Caco-2 (cell line): ENCODE measurements at regions of chr10 and their contacts with region 1.

Region 1: GRCh38 chr10:18651324-18652007 is at the start of gene NSUN6:
- DNase-seq: peak; percentile 94 to 95
- H3K4me3 ChIP-seq: peak within 1 kb of the TSS; percentile 57
- H3K4me3 Mint-ChIP-seq: peak within 1 kb of the TSS; percentile 92
- H3K27ac Mint-ChIP-seq: peak within 1 kb of the TSS; percentile 94
- H3K4me1 ChIP-seq: peaks cover 12% of the 10 kb centered on the region; the same call in 1 of the 2 replicates
- H3K4me1 Mint-ChIP-seq: peaks cover 9% of the 10 kb centered on the region
- H3K27me3 ChIP-seq: no peaks in the 10 kb centered on the region
- H3K27me3 Mint-ChIP-seq: no peaks in the 10 kb centered on the region
- CTCF ChIP-seq: peak in 1 of 2 experiments; percentile 11
- total RNA-seq, gene NSUN6: 17.3 and 17.7 TPM in 2 replicates

Region 2: GRCh38 chr10:18214691-18215563 is 436.5 kb before region 1 on chr10:
- CTCF ChIA-PET with region 1: no interaction called
- POLR2A ChIA-PET with region 1: no interaction called
- intact Hi-C with region 1: no loop called
- DNase-seq: peak; percentile 46 to 65
- H3K4me3 ChIP-seq: no peak overlapping the region
- H3K4me3 Mint-ChIP-seq: no peak overlapping the region
- H3K27ac Mint-ChIP-seq: no peak overlapping the region
- H3K4me1 ChIP-seq: peaks cover 11% of the 10 kb centered on the region
- H3K4me1 Mint-ChIP-seq: peaks cover 7% of the 10 kb centered on the region
- H3K27me3 ChIP-seq: no peaks in the 10 kb centered on the region
- H3K27me3 Mint-ChIP-seq: peaks cover under 1% of the 10 kb centered on the region
- CTCF ChIP-seq: peak; percentile 81 to 91

Region 3: DNA sequence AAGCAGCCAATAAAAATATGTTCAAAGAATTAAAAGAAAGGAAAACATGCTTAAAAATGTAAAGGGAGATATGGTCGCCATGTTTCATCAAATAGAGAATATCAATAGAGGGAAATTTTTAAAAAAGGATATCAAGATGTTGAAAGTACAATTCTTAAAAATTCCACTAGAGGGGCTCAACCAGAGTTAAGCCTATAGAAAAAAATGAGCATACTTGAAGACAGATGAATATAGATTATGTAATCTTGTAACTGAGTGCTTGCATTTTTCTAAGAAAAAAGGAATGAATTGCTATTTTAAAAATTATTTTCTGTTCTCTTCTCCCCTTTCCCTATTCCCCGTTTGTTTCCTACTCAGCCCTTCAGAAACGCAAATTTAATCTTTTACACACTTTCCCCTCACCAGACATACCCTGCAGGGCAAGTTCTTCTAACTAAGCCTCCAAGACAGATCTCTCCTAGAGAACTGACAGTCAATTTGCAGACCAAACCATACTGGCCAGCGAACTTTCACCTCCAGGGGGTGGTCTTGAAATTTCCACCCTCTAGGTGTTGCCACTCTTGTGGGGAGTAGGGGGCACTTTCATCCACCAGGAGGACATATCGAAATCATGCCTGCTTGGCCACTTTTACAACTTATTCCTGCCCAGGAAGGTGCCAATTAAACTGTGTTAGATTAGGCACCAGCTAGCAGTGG is 67.7 kb before region 1 on chr10:
- CTCF ChIA-PET with region 1: no interaction called
- POLR2A ChIA-PET with region 1: no interaction called
- intact Hi-C with region 1: loop called (anchors 2 kb)
- DNase-seq: no peak
- H3K4me3 ChIP-seq: no peak overlapping the region
- H3K4me3 Mint-ChIP-seq: no peak overlapping the region
- H3K27ac Mint-ChIP-seq: no peak overlapping the region
- H3K4me1 ChIP-seq: no peaks in the 10 kb centered on the region
- H3K4me1 Mint-ChIP-seq: no peaks in the 10 kb centered on the region
- H3K27me3 ChIP-seq: no peaks in the 10 kb centered on the region
- H3K27me3 Mint-ChIP-seq: no peaks in the 10 kb centered on the region
- CTCF ChIP-seq: peak; percentile 39 to 47

Region 4: DNA sequence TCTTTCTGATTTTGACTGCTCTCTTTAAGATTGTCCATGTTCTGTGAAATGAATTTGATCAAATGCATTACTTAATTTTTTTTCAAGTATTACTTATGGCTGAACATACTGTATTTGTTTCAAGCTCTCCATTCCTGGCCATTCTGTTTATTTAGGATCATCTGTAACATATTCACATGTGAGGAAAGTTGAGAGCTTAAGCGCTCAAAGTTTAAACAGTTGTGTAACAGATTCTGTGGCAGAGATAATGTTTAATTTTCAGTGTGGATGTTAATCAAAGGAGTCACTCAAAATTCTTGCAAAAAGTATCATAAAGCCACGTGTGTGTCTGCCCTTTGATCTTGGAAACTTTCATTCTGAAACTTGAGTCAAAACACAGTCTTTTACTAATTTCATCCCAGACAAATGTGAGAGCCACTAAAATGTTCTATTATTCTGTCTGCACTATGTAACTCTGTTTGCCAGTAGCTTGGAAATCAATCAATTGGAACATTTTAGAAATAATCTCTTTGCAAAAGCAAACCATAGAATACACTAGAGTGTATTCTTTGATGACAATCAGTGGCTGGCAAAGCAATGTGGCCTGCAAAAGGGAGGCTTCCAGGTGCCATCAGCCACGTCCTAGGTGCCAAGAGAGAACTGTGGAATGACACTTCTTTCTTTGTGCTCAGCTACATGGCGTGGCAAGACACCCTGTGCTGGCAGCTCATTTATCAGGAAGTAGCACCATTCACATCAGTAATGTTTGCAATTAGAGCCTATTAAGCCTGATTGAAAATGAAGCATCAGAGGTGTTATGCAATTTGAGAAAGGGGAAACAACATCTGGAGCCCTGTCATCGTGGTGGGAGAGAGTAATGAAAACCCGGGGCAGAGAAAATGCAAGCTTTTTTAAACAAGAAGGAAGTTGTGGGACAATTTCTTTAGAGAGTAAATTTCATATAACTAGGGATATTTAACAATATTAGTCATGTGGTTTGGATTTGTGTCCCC is 48.7 kb after region 1 on chr10:
- CTCF ChIA-PET with region 1: no interaction called
- POLR2A ChIA-PET with region 1: no interaction called
- intact Hi-C with region 1: no loop called
- DNase-seq: no peak
- H3K4me3 ChIP-seq: no peak overlapping the region
- H3K4me3 Mint-ChIP-seq: no peak overlapping the region
- H3K27ac Mint-ChIP-seq: no peak overlapping the region
- H3K4me1 ChIP-seq: 0 out of 2 replicates have a peak, but pooled peaks cover 6% of the 10 kb centered on the region
- H3K4me1 Mint-ChIP-seq: peaks cover 12% of the 10 kb centered on the region
- H3K27me3 ChIP-seq: no peaks in the 10 kb centered on the region
- H3K27me3 Mint-ChIP-seq: no peaks in the 10 kb centered on the region
- CTCF ChIP-seq: no peak